Transverse colon (tissue), 4 donors: ENCODE measurements at regions of chr9 and their contacts with region 1.

Region 1: GRCh38 chr9:85024374-85024773 is 354.8 kb downstream of the NTRK2 start:
- DNase-seq: no peak
- H3K4me3 ChIP-seq: no peak overlapping the region
- H3K27ac ChIP-seq: no peak overlapping the region
- H3K4me1 ChIP-seq: no peaks in the 10 kb centered on the region
- H3K27me3 ChIP-seq: no peaks in the 10 kb centered on the region
- CTCF ChIP-seq: no peak
- EP300 ChIP-seq: no peak
- POLR2A ChIP-seq: no peak

Region 2: GRCh38 chr9:84917366-84918063 is 106.9 kb before region 1 on chr9:
- in situ Hi-C with region 1: no loop called
- intact Hi-C with region 1: no loop called
- DNase-seq: peak; percentile 62
- H3K4me3 ChIP-seq: no peak overlapping the region
- H3K27ac ChIP-seq: peak overlapping the region; percentile 69 to 79 (median 72)
- H3K4me1 ChIP-seq: peaks cover 0 to 40% (median 26%) of the 10 kb centered on the region in 4 donors
- H3K27me3 ChIP-seq: no peaks in the 10 kb centered on the region
- CTCF ChIP-seq: no peak
- EP300 ChIP-seq: no peak
- POLR2A ChIP-seq: no peak

Region 3: DNA sequence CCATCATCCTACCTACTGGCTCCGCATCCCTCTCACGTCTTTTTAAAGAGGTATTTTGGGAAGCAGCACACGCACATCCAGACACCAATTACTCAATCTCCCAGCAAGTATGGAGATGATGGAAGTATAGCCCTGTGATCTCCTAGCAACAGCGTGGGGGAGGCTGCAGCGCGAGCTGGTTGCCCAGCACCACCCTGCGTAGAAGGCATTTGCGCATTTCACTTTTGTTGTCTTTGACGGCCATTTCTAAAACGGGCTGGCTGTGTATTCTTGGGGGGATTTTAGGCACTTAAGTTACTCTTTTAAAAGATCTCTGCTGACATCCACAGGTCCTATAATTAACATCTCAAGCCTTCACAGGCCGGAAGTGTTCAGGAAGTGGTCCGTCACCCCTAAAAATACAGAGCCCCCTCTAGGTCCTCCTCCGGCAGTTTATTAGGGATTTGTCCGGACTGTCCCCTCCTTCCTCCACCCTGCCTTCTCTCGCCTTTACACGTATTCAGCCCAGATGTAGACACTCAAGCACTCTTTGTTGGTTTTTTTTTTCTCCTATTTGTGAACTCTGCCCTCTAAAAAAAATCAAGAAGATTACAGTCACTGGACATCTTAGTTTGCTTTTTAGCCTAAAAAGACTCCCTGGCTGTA is 16.6 kb after region 1 on chr9:
- in situ Hi-C with region 1: no loop called
- intact Hi-C with region 1: no loop called
- DNase-seq: no peak
- H3K4me3 ChIP-seq: no peak overlapping the region
- H3K27ac ChIP-seq: no peak overlapping the region
- H3K4me1 ChIP-seq: peaks cover 0 to 12% (median 3%) of the 10 kb centered on the region in 4 donors
- H3K27me3 ChIP-seq: no peaks in the 10 kb centered on the region
- CTCF ChIP-seq: no peak
- EP300 ChIP-seq: no peak
- POLR2A ChIP-seq: no peak

Region 4: DNA sequence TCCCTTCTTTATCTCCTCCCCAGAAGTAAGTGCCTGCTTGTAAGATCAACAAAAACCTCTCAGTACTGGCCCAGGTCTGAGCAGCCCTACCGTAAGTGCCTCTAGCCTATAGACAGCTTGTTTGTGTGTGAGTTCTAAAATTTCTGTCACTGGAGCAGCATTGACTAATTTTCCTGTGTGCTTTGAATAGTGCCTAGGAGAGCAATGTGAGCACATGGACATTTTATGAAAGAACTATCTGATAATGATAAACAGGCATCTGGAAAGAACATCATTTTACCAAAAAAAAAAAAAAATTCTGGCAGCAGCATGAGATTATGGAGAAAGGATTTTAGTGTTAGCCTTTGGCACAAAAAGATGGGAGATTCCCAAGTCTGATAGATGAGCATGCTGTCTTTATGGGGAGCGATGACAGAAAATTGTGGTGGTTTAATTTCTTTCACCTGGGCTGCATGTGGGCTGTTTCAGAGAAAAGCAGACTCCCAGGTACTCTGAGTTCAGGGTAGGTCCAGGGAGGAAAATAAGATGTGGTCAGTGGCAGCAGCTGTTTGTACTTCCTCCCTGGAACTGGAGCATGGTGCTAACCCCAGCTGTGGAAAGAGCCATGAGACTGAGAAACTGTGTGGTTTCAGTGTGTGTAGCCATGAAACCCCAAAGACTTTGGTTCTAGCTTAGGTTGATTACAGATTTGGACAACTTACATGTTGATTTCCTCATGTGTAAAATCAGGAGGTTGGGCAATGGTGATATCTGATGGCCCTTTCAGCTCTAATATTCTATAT is 65.0 kb after region 1 on chr9:
- in situ Hi-C with region 1: loop called in 1 of 4 experiments (anchors 10 kb)
- intact Hi-C with region 1: no loop called
- DNase-seq: no peak
- H3K4me3 ChIP-seq: no peak overlapping the region
- H3K27ac ChIP-seq: no peak overlapping the region
- H3K4me1 ChIP-seq: no peaks in the 10 kb centered on the region
- H3K27me3 ChIP-seq: no peaks in the 10 kb centered on the region
- CTCF ChIP-seq: no peak
- EP300 ChIP-seq: no peak
- POLR2A ChIP-seq: no peak